ENCODE measurements at regions of chr12 and their contacts with region 1.

Region 1: DNA sequence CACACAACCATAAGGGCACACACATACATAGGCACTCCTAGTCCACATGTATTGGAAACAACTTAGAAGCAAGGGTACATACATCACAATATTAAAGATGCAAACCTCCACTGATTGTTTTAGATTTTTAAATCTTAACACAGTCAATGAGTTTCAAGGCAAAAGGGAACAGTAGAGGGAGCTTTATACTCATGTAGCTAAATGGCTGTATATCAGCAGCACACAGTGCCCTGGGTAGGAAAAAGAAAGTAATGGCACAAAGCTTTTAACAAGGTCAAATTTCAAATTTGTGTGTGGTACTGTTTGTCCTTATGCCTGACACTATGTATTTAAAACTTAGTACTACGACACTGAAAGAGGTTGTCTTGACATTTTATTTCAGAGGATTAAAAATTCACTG is 262.0 kb downstream of the MED13L start:
- DNase-seq: no peak
- H3K4me3 ChIP-seq: no peak overlapping the region
- H3K27ac ChIP-seq: no peak overlapping the region
- H3K4me1 ChIP-seq: peaks cover 0 to 3% of the 10 kb centered on the region in 2 donors
- H3K27me3 ChIP-seq: no peaks in the 10 kb centered on the region
- CTCF ChIP-seq: peak; percentile 42 to 65 (median 45)

Region 2: GRCh38 chr12:116123451-116124258 is 108.1 kb after region 1 on chr12:
- intact Hi-C with region 1: loop called (anchors 10 kb)
- DNase-seq: no peak
- H3K4me3 ChIP-seq: peak overlapping the region in 1 of 2 donors; percentile 12
- H3K27ac ChIP-seq: no peak overlapping the region
- H3K4me1 ChIP-seq: peaks cover 10 to 71% of the 10 kb centered on the region in 2 donors
- H3K27me3 ChIP-seq: no peaks in the 10 kb centered on the region
- CTCF ChIP-seq: no peak

Measured in ascending aorta (tissue), 2 donors.